Activated B cell treated with CpG ODN at 0.5 μM for 24 hours (primary cell): ENCODE measurements at regions of chr4 and their contacts with region 1.

Region 1: DNA sequence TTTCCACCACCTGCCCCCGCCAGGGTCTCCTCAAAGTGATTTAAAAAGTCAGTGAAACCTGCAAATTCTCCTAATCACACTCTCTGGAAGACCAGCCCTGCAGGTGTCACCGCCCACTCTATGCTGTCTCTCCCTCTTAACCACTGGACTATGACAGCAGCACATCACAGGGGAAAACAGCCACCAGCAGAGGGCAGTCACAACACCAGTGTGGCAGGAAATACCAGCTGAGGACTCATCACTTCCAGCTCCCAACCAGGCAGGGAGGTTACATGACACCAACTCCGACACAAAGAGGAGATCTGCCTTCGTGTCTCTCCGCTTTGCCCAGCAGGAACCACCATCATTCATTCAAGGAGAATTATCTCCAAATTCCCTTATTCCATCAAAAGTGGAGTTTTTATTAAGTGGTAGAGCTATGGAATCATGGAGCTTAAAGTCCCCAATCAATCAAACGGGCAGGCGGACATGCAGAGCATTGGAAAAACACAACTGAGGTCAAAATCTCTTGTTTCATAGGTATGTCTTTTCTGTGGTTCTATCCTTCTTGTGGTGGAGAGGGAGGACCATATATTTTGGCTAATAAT is 91.3 kb downstream of the NSUN7 start:
- DNase-seq: peak; percentile 42
- ATAC-seq: peak; percentile 75
- H3K4me3 Mint-ChIP-seq: no peak overlapping the region
- H3K27ac Mint-ChIP-seq: peak overlapping the region; percentile 67
- H3K4me1 Mint-ChIP-seq: peaks cover 35% of the 10 kb centered on the region
- H3K27me3 Mint-ChIP-seq: no peaks in the 10 kb centered on the region
- CTCF ChIP-seq: peak; percentile 34

Region 2: DNA sequence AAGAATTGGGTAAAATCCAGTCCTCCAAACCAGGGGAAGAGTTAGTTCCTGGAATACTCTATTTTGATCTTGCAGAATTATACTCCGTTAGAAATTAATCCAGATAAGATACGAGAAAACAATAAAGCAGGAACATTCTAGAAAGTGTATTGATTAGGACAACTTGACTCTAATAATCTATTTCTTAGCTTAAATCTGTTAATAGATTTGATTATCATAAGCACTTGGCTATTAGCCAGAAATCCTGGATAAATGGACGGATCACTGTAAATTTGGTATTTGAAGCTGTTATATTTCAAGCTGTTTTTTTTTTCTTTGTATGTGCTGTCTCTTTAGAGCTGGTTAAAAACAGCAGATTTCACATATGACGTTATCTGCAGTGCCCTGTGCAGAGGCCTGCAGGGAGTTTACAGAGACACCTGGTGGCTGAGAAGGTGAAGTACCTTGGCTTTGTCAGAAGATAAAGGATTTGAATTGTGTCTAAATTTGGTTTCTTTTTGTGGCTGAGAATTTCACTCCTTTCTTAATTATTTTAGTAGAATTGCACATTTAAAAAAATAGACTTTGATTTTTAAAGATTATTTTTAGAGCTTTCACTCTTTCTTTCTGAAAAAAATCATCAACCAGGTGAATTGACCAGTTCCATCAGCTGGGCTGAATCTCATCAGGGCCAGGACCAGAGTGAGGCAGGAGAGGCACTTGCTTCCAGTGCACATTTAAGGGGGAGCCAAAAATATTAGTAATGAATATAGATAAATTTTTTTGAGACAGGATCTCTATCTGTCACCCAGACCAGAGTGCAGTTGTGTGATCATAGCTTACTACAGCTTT is 515.7 kb before region 1 on chr4:
- CTCF ChIA-PET with region 1: no interaction called
- POLR2A ChIA-PET with region 1: no interaction called
- intact Hi-C with region 1: loop called (anchors 10 kb)
- DNase-seq: no peak
- ATAC-seq: peak; percentile 100
- H3K4me3 Mint-ChIP-seq: no peak overlapping the region
- H3K27ac Mint-ChIP-seq: no peak overlapping the region
- H3K4me1 Mint-ChIP-seq: peaks cover 14% of the 10 kb centered on the region
- H3K27me3 Mint-ChIP-seq: peaks cover 5% of the 10 kb centered on the region
- CTCF ChIP-seq: no peak

Region 3: DNA sequence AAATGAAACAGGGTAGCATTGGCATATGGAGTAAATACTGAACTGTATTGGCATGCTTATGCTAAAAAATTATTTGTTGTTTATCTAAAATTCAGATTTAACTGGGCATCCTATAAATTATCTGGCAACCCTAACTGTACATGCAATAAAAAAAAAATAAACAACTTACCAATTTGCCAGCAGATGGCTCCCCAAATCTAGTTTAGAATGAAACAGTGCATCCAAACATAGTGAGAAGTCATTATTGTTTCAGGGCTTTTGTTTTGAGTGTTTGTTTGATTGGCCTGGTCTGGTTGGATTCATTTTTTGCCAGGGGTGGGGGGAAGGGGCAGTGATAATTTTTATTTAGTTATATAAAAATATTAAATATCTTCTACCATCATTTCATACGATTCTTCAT is 104.2 kb before region 1 on chr4:
- CTCF ChIA-PET with region 1: interaction called, 6 read pairs
- POLR2A ChIA-PET with region 1: no interaction called
- intact Hi-C with region 1: loop called (anchors 2 kb)
- DNase-seq: no peak
- ATAC-seq: no peak
- H3K4me3 Mint-ChIP-seq: no peak overlapping the region
- H3K27ac Mint-ChIP-seq: no peak overlapping the region
- H3K4me1 Mint-ChIP-seq: peaks cover 2% of the 10 kb centered on the region
- H3K27me3 Mint-ChIP-seq: peaks cover 2% of the 10 kb centered on the region
- CTCF ChIP-seq: no peak

Region 4: GRCh38 chr4:40856822-40857362 is 15.8 kb after region 1 on chr4:
- CTCF ChIA-PET with region 1: interaction called, 7 read pairs
- POLR2A ChIA-PET with region 1: interaction called, 4 read pairs
- intact Hi-C with region 1: loop called (anchors 1 kb)
- DNase-seq: peak; percentile 65
- ATAC-seq: peak; percentile 97
- H3K4me3 Mint-ChIP-seq: peak overlapping the region; percentile 84
- H3K27ac Mint-ChIP-seq: peak overlapping the region; percentile 7
- H3K4me1 Mint-ChIP-seq: peaks cover 29% of the 10 kb centered on the region
- H3K27me3 Mint-ChIP-seq: peaks cover 13% of the 10 kb centered on the region
- CTCF ChIP-seq: no peak

Region 5: GRCh38 chr4:40897557-40898203 is 56.6 kb after region 1 on chr4:
- CTCF ChIA-PET with region 1: interaction called, 20 read pairs
- POLR2A ChIA-PET with region 1: no interaction called
- intact Hi-C with region 1: loop called (anchors 1 kb)
- DNase-seq: peak; percentile 54
- ATAC-seq: peak; percentile 67
- H3K4me3 Mint-ChIP-seq: peak overlapping the region; percentile 69
- H3K27ac Mint-ChIP-seq: no peak overlapping the region
- H3K4me1 Mint-ChIP-seq: peaks cover 8% of the 10 kb centered on the region
- H3K27me3 Mint-ChIP-seq: peaks cover 2% of the 10 kb centered on the region
- CTCF ChIP-seq: peak; percentile 37

Region 6: GRCh38 chr4:41579526-41579925 is 738.4 kb after region 1 on chr4:
- CTCF ChIA-PET with region 1: no interaction called
- POLR2A ChIA-PET with region 1: no interaction called
- intact Hi-C with region 1: no loop called
- DNase-seq: no peak
- ATAC-seq: no peak
- H3K4me3 Mint-ChIP-seq: no peak overlapping the region
- H3K27ac Mint-ChIP-seq: no peak overlapping the region
- H3K4me1 Mint-ChIP-seq: no peaks in the 10 kb centered on the region
- H3K27me3 Mint-ChIP-seq: no peaks in the 10 kb centered on the region
- CTCF ChIP-seq: no peak